Sigmoid colon (tissue), 7 donors: ENCODE measurements at regions of chr3 and their contacts with region 1.

Region 1: GRCh38 chr3:58188173-58188564 is 22.6 kb downstream of the DNASE1L3 start:
- DNase-seq: no peak
- H3K4me3 ChIP-seq: no peak overlapping the region
- H3K27ac ChIP-seq: peak overlapping the region in 1 of 4 donors; percentile 37
- H3K4me1 ChIP-seq: no peaks in the 10 kb centered on the region
- H3K27me3 ChIP-seq: no peaks in the 10 kb centered on the region
- CTCF ChIP-seq: no peak
- EP300 ChIP-seq: no peak
- POLR2A ChIP-seq: no peak

Region 2: DNA sequence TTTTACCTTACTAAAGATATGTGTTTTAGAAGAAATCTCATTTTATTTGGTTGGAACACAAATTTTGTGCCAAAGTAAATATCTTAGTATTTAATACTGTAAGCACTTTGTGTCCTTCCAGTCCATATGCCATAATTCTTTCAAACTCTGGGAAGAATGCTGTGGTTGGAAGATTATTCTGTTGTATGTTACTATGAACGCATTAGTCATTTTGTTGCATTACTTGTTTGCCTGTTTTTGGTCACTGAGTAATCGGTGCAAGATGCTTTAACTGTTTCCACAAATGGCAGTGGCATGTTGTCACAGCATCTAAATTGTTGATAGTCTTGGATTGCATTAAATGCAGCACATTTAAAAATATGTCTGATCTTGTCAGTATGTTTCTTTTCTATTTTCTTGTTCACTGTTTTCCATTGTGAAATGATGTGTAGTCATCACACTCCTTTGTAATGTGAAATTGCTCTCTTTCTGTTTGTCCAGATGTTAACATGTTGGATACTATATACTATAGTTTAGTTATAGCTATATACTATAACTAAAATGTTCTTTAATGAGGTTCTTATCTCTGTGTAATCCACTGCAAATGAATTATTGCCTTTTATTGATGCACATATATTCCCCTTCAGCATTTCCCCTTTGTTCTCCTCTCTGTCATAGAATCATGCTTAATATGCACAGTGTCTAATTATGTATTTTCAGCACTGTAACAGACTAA is 269.9 kb before region 1 on chr3:
- intact Hi-C with region 1: no loop called
- DNase-seq: no peak
- H3K4me3 ChIP-seq: no peak overlapping the region
- H3K27ac ChIP-seq: peak overlapping the region; percentile 60 to 93 (median 64)
- H3K4me1 ChIP-seq: peaks cover 0 to 82% (median 52%) of the 10 kb centered on the region in 4 donors
- H3K27me3 ChIP-seq: no peaks in the 10 kb centered on the region
- CTCF ChIP-seq: no peak
- EP300 ChIP-seq: no peak
- POLR2A ChIP-seq: no peak

Region 3: GRCh38 chr3:57974796-57975388 is 213.3 kb before region 1 on chr3:
- intact Hi-C with region 1: no loop called
- DNase-seq: no peak
- H3K4me3 ChIP-seq: no peak overlapping the region
- H3K27ac ChIP-seq: peak overlapping the region; percentile 21 to 68 (median 44)
- H3K4me1 ChIP-seq: peaks cover 0 to 31% (median 27%) of the 10 kb centered on the region in 4 donors
- H3K27me3 ChIP-seq: no peaks in the 10 kb centered on the region
- CTCF ChIP-seq: no peak
- EP300 ChIP-seq: no peak
- POLR2A ChIP-seq: no peak

Region 4: GRCh38 chr3:58129041-58129770 is 59.0 kb before region 1 on chr3:
- intact Hi-C with region 1: no loop called
- DNase-seq: no peak
- H3K4me3 ChIP-seq: no peak overlapping the region
- H3K27ac ChIP-seq: peak overlapping the region in 3 of 4 donors; percentile 39 to 66 (median 65)
- H3K4me1 ChIP-seq: peaks cover 0 to 22% (median 14%) of the 10 kb centered on the region in 4 donors
- H3K27me3 ChIP-seq: no peaks in the 10 kb centered on the region
- CTCF ChIP-seq: no peak
- EP300 ChIP-seq: no peak
- POLR2A ChIP-seq: no peak

Region 5: DNA sequence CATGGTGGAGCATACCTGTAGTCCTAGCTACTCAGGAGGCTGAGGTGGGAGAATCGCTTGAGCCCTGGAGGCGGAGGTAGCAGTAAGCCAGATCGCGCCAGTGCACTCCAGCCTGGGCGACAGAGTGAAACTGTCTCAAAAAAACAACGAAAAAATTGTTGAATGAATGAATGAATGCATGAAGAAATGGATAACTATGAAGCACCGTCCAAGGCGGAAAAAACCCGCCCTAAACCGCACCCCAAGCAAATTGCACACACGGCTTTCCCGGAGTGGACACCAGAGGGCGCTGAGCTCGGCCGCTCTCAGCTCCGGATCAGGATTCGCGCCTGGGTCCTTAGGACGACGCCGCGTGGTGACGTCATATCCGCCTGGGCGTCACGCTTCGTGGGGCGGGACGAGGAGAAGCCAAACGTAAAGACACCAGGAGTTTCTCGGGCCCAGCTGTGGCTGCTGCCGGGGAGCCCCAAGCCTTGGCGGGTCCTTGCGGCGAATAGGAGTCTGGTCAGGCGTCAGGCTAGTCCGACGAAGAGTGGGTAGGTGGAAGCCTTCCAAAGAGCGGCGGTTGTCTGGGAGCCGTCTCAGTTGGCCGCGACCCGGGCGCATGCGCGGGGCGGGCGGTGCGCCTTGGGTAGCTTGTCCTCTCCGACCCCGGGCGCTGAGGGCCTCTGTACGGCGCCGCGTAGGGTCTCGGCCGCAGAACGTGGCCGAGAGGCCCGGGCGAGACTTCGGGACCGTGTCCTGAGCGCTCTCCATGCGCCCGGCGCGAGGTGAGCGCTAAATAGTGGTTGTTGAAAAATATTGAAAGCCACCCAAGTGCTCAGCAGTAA is 117.9 kb after region 1 on chr3 and contains the starts of genes HTD2 and RPP14:
- intact Hi-C with region 1: loop called (anchors 1 kb)
- DNase-seq: peak; percentile 99
- H3K4me3 ChIP-seq: peak within 1 kb of the TSS; percentile 65 to 96 (median 77)
- H3K27ac ChIP-seq: peak within 1 kb of the TSS; percentile 89 to 98 (median 96)
- H3K4me1 ChIP-seq: peaks cover 0 to 32% (median 30%) of the 10 kb centered on the region in 4 donors
- H3K27me3 ChIP-seq: no peaks in the 10 kb centered on the region
- CTCF ChIP-seq: peak; percentile 90 to 98 (median 92)
- EP300 ChIP-seq: peak in 1 of 4 donors; percentile 31
- POLR2A ChIP-seq: peak; percentile 60 to 62
- total RNA-seq, gene HTD2: 6.9 to 20.8 (median 12.5) TPM
- total RNA-seq, gene RPP14: 10.8 to 16.7 (median 13.8) TPM

Region 6: GRCh38 chr3:58419780-58420507 is 231.8 kb after region 1 on chr3:
- intact Hi-C with region 1: loop called (anchors 10 kb)
- DNase-seq: peak; percentile 75
- H3K4me3 ChIP-seq: no peak overlapping the region
- H3K27ac ChIP-seq: peak overlapping the region; percentile 46 to 63 (median 54)
- H3K4me1 ChIP-seq: peaks cover 0 to 24% (median 10%) of the 10 kb centered on the region in 4 donors
- H3K27me3 ChIP-seq: no peaks in the 10 kb centered on the region
- CTCF ChIP-seq: no peak
- EP300 ChIP-seq: no peak
- POLR2A ChIP-seq: no peak